Tibial artery (tissue), 4 donors: ENCODE measurements at regions of chr12 and their contacts with region 1.

Region 1: DNA sequence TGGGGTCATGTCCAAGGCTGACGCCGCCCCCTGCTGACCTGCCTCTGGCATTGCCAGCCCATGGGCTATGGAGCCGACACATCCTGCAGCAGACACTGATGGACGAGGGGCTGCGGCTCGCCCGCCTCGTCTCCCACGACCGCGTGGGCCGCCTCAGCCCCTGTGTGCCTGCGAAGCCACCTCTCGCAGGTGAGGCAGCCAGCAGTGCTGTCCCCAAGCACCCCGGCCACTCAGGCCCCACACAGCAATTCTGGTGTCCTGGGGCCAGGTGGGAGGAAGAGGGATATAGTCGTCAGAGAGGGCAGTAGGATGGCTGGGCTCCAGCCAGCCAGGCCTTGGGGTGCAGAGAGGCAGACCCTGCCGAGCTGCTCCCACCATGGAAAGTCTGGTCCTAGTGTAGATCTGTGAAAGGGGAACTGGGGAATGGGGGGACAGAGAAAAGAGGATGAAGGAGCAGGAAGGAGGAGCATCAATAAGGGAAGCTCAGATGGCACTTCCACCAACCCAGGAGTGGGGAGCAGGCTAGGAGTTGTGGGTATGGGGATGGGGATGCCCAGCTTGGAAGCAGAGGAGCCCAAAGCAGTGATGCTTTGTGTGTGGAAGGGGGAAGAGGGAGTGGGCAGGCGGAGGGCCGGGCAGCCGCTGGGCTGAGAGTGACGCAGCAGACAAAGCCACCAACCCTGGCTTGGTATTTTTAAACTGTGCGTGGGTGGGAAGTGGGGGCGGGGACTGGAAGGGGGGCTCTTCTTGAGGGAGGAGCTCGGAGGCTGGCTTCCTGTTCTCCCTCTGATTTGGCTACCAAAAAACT is 4.7 kb downstream of the NAB2 start:
- DNase-seq: peak; percentile 77 to 94
- H3K4me3 ChIP-seq: peak overlapping the region; percentile 5 to 12
- H3K27ac ChIP-seq: peak overlapping the region; percentile 91 to 99
- H3K4me1 ChIP-seq: peaks cover 8 to 62% (median 45%) of the 10 kb centered on the region in 4 donors
- H3K27me3 ChIP-seq: no peaks in the 10 kb centered on the region
- CTCF ChIP-seq: peak; percentile 38

Region 2: GRCh38 chr12:56785141-56785865 is 308.3 kb before region 1 on chr12:
- intact Hi-C with region 1: no loop called
- DNase-seq: no peak
- H3K4me3 ChIP-seq: no peak overlapping the region
- H3K27ac ChIP-seq: no peak overlapping the region
- H3K4me1 ChIP-seq: no peaks in the 10 kb centered on the region
- H3K27me3 ChIP-seq: no peaks in the 10 kb centered on the region
- CTCF ChIP-seq: no peak

Region 3: DNA sequence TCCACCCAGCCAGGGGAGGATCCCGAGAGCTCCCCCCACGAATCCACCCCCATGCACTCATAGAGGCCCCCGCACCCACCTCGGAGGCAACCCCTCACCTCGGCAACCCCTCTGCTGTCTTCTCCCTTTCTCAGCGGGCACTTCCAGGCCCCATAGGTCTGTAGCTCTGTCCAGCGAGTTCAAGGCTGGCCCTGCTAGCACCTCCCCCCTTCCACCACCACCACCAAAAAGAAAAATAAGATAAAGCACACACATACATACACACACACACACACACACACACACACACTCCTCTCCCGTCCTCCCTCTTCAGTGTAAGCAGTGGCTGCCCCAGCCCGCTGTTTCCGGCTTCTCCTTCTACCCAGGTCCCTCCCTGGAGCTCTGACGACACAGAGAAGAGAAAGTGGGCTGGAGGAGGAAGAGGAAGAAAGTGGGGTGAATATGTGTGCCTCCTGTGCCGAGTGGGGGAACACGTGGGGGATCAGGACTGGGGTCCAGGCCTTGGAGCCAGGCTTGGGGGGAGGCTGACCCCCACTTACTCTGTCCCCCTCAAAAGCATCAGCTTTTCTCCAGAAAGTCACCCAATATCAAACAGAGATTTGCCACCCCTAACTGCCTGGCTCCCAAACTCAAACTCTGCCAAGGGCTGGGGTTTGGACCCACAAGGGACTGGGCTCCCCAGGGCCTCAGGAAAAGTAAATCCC is 17.6 kb after region 1 on chr12 and contains the start of gene STAT6:
- intact Hi-C with region 1: loop called (anchors 2 kb)
- DNase-seq: peak; percentile 93 to 94
- H3K4me3 ChIP-seq: peak within 1 kb of the TSS; percentile 65 to 74
- H3K27ac ChIP-seq: peak within 1 kb of the TSS; percentile 96 to 99
- H3K4me1 ChIP-seq: peaks cover 4 to 39% (median 31%) of the 10 kb centered on the region in 4 donors
- H3K27me3 ChIP-seq: no peaks in the 10 kb centered on the region
- CTCF ChIP-seq: no peak

Region 4: GRCh38 chr12:57138526-57139272 is 45.1 kb after region 1 on chr12:
- intact Hi-C with region 1: no loop called
- DNase-seq: peak; percentile 92 to 93
- H3K4me3 ChIP-seq: no peak overlapping the region
- H3K27ac ChIP-seq: peak overlapping the region; percentile 95 to 99
- H3K4me1 ChIP-seq: peaks cover 0 to 90% (median 45%) of the 10 kb centered on the region in 4 donors
- H3K27me3 ChIP-seq: no peaks in the 10 kb centered on the region
- CTCF ChIP-seq: no peak